ENCODE measurements at regions of chr4 and their contacts with region 1.

Region 1: DNA sequence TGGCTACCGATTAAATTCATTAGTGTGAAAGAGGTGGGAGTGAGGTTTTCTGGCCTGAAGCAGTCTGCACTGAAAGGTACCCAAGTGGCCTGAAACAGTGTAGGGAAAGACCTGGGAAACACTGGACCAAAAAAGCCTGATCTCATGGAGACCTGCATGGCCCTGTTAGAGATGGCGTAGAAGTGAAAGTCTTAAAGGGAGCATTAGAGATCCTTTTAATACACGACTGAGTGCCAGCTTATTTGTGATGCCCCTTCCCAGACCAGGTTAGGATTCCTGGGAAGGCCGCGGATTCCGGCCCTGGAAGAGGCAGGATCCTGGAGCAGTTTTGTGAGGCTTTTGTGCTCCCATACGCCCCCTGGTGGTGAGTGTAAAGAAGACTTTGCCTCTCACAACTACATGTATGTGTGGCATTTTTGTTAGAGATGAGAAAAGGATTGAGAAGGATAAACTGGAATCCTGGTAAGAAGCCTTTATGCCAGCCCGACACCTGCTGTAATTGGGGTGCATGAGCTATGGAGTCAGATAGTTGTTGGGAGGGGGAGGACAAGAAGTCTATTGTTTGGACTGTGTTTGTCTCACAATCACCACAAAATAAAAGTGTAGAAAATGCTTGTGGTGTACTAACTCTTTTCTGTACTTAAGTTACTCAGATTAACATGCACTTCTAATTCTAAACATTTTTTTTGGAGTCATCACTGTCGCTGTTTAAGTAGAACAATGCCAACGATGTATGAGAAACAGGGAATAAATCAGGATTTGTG is 54.0 kb downstream of the JADE1 start:
- DNase-seq: peak; percentile 74
- H3K4me3 Mint-ChIP-seq: no peak overlapping the region
- H3K27ac Mint-ChIP-seq: no peak overlapping the region
- H3K4me1 Mint-ChIP-seq: peaks cover 47% of the 10 kb centered on the region
- H3K27me3 Mint-ChIP-seq: no peaks in the 10 kb centered on the region

Region 2: GRCh38 chr4:128393101-128393704 is 470.3 kb before region 1 on chr4:
- CTCF ChIA-PET with region 1: no interaction called
- DNase-seq: no peak
- H3K4me3 Mint-ChIP-seq: no peak overlapping the region
- H3K27ac Mint-ChIP-seq: no peak overlapping the region
- H3K4me1 Mint-ChIP-seq: no peaks in the 10 kb centered on the region
- H3K27me3 Mint-ChIP-seq: no peaks in the 10 kb centered on the region

Region 3: GRCh38 chr4:128840711-128841318 is 22.7 kb before region 1 on chr4:
- CTCF ChIA-PET with region 1: interaction called, 10 read pairs
- DNase-seq: no peak
- H3K4me3 Mint-ChIP-seq: no peak overlapping the region
- H3K27ac Mint-ChIP-seq: no peak overlapping the region
- H3K4me1 Mint-ChIP-seq: peaks cover 19% of the 10 kb centered on the region
- H3K27me3 Mint-ChIP-seq: no peaks in the 10 kb centered on the region

Region 4: DNA sequence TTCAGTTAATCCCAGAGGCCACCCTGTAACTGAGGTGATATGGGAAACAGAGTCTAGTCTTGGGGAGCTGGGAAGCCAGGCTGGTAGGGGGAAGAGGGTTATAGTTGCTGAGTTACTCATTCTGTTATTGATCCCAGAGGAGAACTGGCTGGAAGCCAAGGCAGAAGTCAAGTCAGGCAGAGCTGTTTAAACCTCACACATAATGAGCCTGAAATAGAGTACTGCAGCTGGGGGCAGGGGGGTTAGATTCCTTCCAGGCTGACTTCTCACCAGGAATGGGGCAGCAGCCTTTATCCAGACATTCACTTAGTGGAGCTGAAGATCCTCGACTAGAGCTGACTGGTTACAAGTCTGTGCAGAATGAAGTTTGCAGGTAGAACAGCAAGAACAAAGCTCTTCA is 377.3 kb after region 1 on chr4:
- CTCF ChIA-PET with region 1: no interaction called
- DNase-seq: no peak
- H3K4me3 Mint-ChIP-seq: no peak overlapping the region
- H3K27ac Mint-ChIP-seq: no peak overlapping the region
- H3K4me1 Mint-ChIP-seq: no peaks in the 10 kb centered on the region
- H3K27me3 Mint-ChIP-seq: no peaks in the 10 kb centered on the region

Measured in activated naive CD4-positive, alpha-beta T cell treated with anti-CD3 and anti-CD28 coated beads, Interleukin-2, amount 10 ng/mL, durations not matched to agents 7 days and 5 days (primary cell).